Transverse colon (tissue), 4 donors: ENCODE measurements at regions of chr2 and their contacts with region 1.

Region 1: GRCh38 chr2:33723329-33723728 is 124.2 kb upstream of the FAM98A start:
- DNase-seq: no peak
- H3K4me3 ChIP-seq: no peak overlapping the region
- H3K27ac ChIP-seq: no peak overlapping the region
- H3K4me1 ChIP-seq: no peaks in the 10 kb centered on the region
- H3K27me3 ChIP-seq: no peaks in the 10 kb centered on the region
- CTCF ChIP-seq: no peak
- EP300 ChIP-seq: no peak
- POLR2A ChIP-seq: no peak

Region 2: DNA sequence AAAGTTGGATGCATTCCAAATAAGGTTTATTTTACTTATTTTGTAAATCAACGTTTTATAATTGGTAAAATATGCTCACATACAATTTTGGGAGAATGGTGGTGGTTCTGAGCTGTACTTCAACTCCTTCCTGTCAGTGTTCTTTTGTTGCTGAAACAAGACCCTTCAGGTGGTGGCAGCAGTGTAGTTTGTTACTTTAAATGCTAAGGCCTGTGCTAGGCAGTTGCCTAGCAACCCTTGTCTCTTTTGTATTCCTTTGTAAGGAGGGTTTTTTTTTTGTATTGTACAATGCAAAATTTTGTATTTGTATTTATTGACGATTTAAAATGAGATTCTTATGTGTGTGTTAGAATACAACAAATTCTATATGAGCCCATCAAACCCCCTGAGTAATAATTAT is 41.8 kb after region 1 on chr2:
- in situ Hi-C with region 1: no loop called
- intact Hi-C with region 1: no loop called
- DNase-seq: no peak
- H3K4me3 ChIP-seq: no peak overlapping the region
- H3K27ac ChIP-seq: no peak overlapping the region
- H3K4me1 ChIP-seq: no peaks in the 10 kb centered on the region
- H3K27me3 ChIP-seq: no peaks in the 10 kb centered on the region
- CTCF ChIP-seq: no peak
- EP300 ChIP-seq: no peak
- POLR2A ChIP-seq: no peak

Region 3: GRCh38 chr2:34003795-34004194 is 280.5 kb after region 1 on chr2:
- in situ Hi-C with region 1: no loop called
- intact Hi-C with region 1: loop called (anchors 5 kb)
- DNase-seq: no peak
- H3K4me3 ChIP-seq: no peak overlapping the region
- H3K27ac ChIP-seq: no peak overlapping the region
- H3K4me1 ChIP-seq: no peaks in the 10 kb centered on the region
- H3K27me3 ChIP-seq: no peaks in the 10 kb centered on the region
- CTCF ChIP-seq: no peak
- EP300 ChIP-seq: no peak
- POLR2A ChIP-seq: no peak